ENCODE measurements at regions of chr3 and their contacts with region 1.

Region 1: DNA sequence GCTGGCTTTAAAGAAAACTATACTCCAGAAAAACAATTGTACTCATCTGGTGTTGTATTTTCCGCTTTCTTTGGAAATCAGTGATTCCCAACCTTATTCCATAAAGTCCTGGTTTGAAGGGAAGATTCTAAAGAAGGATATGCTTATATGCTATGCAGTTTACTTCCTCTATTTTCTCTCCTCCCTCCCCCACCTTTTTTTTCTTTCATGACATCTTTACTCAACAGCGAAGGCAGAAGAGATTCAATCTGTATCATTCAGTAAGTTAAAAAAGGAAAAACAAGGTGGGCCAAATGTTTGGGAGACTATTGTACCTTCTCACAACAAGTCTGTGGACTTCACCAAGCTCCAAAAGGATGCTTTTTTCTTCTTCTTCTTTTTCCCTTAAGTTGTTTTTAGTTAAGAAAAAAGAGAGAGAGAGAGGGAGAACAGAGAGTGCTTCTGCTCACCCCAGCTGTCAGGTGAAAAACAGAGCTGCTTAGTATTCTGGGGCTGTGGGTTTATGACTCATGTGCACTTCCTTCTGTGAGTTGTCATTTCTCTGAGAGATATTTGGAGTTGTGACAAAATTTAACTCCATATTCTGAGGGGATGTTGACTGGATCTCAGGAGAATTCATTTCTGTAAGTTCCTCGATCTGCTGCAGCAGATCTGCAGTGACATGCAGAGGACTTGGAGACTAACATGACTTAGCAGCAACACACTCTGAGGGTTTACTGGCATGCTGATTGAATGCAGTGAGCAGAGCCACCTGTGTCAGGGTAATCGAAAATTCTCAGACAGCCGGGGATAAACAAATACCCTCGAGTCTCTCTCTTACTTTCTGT is 70.7 kb downstream of the SSR3 start:
- DNase-seq: no peak
- ATAC-seq: peak in 7 of 8 donors; percentile 64 to 88 (median 81)
- H3K4me3 ChIP-seq: peak overlapping the region in 1 of 10 donors; percentile 16
- H3K27ac ChIP-seq: peak overlapping the region in 7 of 10 donors; percentile 42 to 88 (median 51)
- H3K4me1 ChIP-seq: peaks cover 0 to 26% (median 13%) of the 10 kb centered on the region in 9 donors
- H3K27me3 ChIP-seq: no peaks in the 10 kb centered on the region
- CTCF ChIP-seq: no peak

Region 2: GRCh38 chr3:156291272-156292123 is 192.7 kb before region 1 on chr3:
- intact Hi-C with region 1: loop called in 1 of 10 experiments (anchors 10 kb)
- DNase-seq: no peak
- ATAC-seq: peak in 7 of 8 donors; percentile 39 to 67 (median 60)
- H3K4me3 ChIP-seq: peak overlapping the region in 9 of 10 donors; percentile 1 to 53 (median 39)
- H3K27ac ChIP-seq: peak overlapping the region in 1 of 10 donors; percentile 26
- H3K4me1 ChIP-seq: peaks cover 2 to 16% (median 9%) of the 10 kb centered on the region in 9 donors
- H3K27me3 ChIP-seq: peaks cover 0 to 40% (median 34%) of the 10 kb centered on the region in 7 donors
- CTCF ChIP-seq: no peak

Region 3: GRCh38 chr3:156433138-156433537 is 51.0 kb before region 1 on chr3:
- intact Hi-C with region 1: no loop called
- DNase-seq: no peak
- ATAC-seq: peak in 2 of 8 donors; percentile 42 to 59
- H3K4me3 ChIP-seq: no peak overlapping the region
- H3K27ac ChIP-seq: peak overlapping the region in 1 of 10 donors; percentile 12
- H3K4me1 ChIP-seq: peaks cover 0 to 8% (median 0%) of the 10 kb centered on the region in 9 donors
- H3K27me3 ChIP-seq: no peaks in the 10 kb centered on the region
- CTCF ChIP-seq: no peak

Region 4: GRCh38 chr3:156727519-156728205 is 243.5 kb after region 1 on chr3:
- intact Hi-C with region 1: no loop called
- DNase-seq: no peak
- ATAC-seq: peak in 1 of 8 donors; percentile 17
- H3K4me3 ChIP-seq: no peak overlapping the region
- H3K27ac ChIP-seq: no peak overlapping the region
- H3K4me1 ChIP-seq: peaks cover 0 to 17% (median 5%) of the 10 kb centered on the region in 9 donors
- H3K27me3 ChIP-seq: no peaks in the 10 kb centered on the region
- CTCF ChIP-seq: no peak

Measured in heart right ventricle (tissue), 16 donors.